ENCODE measurements at regions of chr1 and their contacts with region 1.

Region 1: DNA sequence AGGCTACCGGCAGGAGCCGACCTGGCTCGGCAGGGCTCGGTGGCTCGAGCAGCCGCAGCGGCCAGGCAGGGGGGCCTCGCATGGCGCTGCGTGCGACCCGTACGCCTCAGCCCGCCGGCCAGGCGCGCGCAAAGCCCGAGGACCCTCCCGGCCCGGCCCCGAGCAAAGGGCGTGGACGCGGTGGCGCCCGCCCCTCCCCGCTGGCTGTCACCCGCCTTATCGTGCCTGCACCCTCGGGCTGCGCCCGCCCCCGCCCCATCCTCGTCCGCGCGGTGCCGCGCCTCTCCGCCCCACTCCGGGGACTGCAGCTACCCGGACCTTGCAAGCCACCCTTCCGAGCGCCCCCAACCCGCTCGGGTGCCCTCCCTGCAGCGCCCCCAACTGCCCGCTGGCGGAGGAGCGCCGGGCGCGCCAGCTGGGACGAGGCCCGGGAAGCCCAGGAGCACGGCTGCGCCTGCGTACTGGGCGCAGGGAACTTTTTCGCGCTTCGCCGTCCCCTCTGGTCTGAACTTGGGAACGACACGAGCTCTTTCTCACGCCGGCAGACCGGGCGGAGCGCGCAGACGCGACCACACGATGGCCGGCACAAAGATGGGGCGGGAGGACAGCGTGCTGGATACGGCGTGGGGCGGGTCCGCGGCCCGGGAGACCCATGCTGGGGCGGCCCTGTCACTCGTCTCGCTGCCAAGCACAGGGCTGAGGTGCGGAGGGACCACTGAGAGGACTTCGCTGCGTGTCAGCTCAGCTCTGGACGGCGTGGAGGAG is at the start of gene ABCB10:
- DNase-seq: peak; percentile 97
- ATAC-seq: peak; percentile 96
- total RNA-seq, gene ABCB10: 12.7 TPM

Region 2: DNA sequence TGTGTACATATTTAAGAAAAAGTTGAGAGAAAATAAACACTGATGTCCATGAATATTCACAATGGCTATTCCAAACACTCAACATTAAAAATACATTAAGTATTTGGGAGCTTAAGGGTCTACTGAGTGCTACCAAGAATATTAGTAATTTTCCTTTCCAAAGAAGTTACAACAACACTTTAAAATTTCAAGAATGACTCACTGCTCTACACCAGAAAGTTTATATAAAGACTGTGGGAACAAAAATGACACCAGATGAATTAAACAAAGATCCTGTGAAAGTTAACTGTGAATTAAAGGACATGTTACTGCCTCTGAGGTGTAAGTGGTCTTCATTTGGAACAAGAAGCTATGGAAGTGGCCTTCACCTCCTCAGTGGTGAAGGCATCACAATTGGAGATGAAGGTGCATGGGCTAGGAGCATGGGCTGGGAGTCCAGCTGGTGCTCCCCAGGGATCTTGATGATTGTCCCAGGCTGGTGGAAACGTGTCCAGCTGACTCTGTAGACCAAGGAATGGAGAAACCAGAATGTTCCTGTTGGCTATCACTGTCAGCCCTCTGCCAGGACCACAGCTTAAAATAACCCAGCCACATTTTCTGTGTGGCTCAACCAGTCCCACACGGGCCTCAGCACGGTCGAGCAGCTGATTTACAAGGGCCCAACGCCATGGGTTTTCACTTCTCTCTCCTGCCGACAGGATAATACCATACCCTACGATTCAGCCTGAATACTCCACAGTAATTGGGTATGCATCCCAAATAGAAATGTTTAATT is 38.4 kb after region 1 on chr1:
- intact Hi-C with region 1: loop called (anchors 5 kb)
- DNase-seq: peak; percentile 75
- ATAC-seq: peak; percentile 96

Region 3: DNA sequence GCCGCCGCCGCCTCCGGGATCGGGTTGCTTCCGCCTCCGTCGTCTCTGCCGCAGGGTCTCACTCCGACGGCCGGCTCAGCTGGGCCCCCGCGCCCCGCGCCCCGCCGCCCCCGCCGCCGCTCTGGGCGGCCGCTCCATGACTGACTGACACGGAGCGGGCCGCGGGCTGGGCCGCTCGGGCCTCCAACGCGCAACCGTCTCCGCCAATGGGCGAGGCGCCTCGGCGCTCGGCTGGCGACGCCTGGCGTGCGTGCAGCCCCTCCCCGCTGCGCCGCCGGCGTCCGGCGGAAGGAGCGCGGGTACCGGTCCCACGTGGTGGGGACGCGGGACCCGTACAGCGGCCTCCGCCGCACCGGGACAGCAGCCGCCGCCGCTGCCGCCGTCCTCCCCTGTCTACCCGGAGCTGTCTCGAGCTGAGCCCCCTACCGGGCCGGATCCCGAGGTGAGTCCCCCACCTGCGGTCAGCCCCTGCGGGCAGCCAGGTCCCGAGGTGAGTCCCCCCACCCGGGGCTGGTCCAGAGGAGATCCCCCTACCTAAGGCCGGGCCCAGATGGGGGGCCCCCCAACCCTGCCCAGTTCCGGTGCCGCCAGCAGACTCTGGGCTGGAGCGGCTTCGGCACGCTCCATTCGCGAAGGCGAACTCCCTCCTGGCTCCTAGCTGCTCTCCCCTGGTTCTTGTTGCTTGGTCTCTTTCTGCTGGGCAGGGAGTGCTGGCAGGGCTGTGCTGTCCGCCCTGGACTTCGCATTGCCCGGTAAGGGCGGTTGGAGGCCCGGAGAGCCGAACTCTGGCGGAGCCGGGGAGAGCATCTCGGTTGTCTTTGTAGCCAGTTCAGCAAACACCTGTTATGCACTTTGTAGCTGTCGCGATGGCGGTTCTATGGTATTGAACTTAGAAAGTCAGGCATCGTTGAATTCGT is 67.4 kb after region 1 on chr1 and contains the starts of genes TAF5L and URB2:
- intact Hi-C with region 1: loop called (anchors 1 kb)
- DNase-seq: peak; percentile 94
- ATAC-seq: peak; percentile 98
- total RNA-seq, gene TAF5L: 10.8 TPM
- total RNA-seq, gene URB2: 3.4 TPM

Region 4: DNA sequence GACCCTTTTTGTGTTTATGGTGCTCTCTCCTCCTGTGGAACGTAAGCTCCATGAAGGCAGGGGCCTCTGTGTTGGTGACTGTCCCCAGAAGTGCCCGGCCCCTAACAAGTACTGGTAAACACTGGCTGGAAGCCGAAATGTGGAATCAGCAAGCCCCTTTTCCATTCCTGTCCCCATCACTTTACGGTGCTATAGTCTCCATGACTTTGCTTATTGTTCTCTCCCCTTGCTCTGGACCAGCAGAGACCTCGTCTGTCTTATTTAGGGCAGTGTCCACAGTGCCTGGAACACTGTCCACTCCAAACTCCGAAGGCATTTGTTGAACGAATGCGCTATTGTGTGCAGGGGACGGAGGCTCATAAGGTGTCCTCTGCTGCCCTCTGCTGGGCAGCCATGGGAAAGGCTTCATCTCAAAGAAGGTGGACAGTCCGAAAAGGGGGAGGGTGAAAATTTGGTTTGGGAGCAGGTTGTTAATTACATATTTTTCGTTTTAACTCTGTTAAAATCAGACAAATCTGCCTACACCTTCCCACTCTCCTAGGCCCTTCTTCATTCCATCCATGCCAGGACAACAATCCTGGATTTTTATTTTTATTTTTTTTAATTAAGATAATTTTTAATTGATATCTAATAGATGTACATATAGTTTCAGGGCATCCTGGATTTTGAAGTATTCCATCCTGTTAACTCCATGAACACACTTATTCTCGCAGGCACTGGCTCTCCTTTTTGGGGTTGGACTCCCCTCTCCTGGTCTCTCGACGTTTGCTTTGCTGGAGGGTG is 751.8 kb after region 1 on chr1:
- intact Hi-C with region 1: loop called (anchors 10 kb)
- DNase-seq: peak; percentile 90
- ATAC-seq: peak; percentile 88